ENCODE measurements at regions of chr19 and their contacts with region 1.

Region 1: DNA sequence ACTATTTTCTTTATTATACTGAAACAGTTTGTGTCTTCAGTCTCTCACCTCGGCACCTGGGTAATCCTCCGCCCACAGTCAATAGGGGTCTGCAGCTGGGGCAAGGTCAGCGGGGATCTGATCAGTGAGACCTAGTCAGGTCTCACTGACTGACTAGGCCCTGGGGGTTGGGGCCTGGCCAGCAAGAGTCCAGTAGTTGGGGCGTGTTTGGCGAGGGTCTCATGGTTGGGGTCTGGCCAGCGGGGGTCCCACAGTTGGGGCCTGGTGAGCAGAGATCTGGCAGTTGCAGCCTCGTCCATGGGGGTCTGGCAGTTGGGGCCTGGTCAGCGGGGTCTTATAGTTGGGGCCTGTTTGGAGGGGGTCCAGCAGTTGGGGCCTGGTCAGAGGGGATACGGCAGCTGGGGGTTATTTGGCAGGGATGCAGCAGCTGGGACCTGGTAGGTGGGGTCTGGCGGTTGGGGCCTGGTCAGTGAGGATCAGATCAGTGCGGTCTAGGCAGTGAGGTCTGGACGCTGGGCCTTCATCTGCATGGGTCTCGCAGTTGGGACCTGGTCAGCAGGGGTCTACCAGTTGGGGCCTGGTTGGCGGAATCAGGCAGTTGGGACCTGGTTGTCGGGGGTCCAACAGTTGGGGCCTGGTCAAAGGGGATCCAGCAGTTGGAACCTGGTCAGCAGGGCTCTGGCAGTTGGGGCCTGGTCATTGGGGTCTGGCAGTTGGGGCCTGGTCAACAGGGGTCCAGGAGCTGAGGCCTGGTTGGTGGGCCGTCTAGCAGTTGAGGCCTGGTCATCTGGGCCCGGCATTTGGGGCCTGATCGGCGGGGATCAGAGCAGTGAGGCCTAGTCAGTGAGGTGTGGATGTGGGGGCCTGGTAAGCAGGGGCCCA is 61.1 kb upstream of the TPM4 start:
- DNase-seq: no peak
- ATAC-seq: no peak

Region 2: DNA sequence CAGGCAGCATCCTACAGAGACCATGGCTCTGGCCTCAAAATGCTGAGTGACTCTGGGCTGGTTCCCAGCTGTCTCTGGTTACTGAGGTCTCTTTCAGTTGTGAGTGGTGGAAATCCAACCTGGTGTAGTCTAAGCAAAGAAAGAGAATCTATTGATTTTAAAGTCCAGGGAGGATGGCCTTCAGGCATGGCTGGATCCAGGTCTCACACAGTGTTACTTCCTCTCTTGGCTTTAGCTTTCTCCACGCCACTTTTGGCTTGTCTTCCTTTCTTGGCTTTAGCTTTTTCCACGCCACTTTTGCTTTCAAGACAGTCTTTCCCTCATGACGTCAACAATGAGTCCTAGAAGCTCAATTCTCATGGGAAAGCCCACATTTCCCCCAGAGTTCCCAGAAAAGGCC is 370.3 kb before region 1 on chr19:
- intact Hi-C with region 1: loop called in 1 of 2 experiments (anchors 5 kb)
- DNase-seq: no peak
- ATAC-seq: no peak

Region 3: DNA sequence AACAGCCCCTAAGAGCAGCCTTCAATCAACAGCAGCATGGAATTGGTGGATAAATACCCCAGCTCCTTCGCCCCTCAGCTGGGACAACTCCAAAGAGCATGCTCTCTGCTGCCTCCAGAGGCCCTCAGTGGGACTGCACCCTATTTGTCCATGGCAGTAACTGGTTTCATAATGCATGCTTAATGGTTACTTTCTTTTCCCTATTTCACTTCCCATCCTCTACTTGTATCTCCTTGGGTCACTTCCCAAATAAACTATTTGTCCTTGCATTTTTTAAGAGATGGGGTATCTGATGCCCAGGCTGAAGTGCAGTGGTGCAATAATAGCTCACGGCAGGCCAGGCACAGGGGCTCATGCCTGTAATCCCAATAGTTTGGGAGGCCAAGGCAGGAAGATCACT is 47.6 kb after region 1 on chr19:
- intact Hi-C with region 1: no loop called
- DNase-seq: peak in 1 of 2 donors; percentile 73
- ATAC-seq: no peak